GM12878 (cell line): ENCODE measurements at regions of chr18 and their contacts with region 1.

Region 1: GRCh38 chr18:74963820-74964446 is 245.0 kb downstream of the PTGR3 start:
- DNase-seq: no peak
- ATAC-seq: peak; percentile 97
- H3K4me3 ChIP-seq: no peak overlapping the region
- H3K27ac ChIP-seq: no peak overlapping the region
- H3K4me1 ChIP-seq: no peaks in the 10 kb centered on the region
- H3K27me3 ChIP-seq: no peaks in the 10 kb centered on the region
- CTCF ChIP-seq: peak; percentile 43 to 65 (median 46); a peak in 4 of 6 replicates
- EP300 ChIP-seq: no peak
- POLR2A ChIP-seq: no peak
- RAD21 ChIP-seq: peak; percentile 71

Region 2: GRCh38 chr18:74652392-74652988 is 311.4 kb before region 1 on chr18:
- CTCF ChIA-PET with region 1: interaction called, 38 read pairs
- POLR2A ChIA-PET with region 1: no interaction called
- RAD21 ChIA-PET with region 1: interaction called, 31 read pairs
- SMC1A ChIA-PET with region 1: interaction called, 32 read pairs
- in situ Hi-C with region 1: loop called (anchors 25 kb)
- intact Hi-C with region 1: loop called (anchors 2 kb)
- DNase-seq: no peak
- ATAC-seq: peak; percentile 85
- H3K4me3 ChIP-seq: no peak overlapping the region
- H3K27ac ChIP-seq: no peak overlapping the region
- H3K4me1 ChIP-seq: no peaks in the 10 kb centered on the region
- H3K27me3 ChIP-seq: no peaks in the 10 kb centered on the region
- CTCF ChIP-seq: peak; percentile 30 to 62 (median 58); a peak in 4 of 6 replicates
- EP300 ChIP-seq: no peak
- POLR2A ChIP-seq: no peak
- RAD21 ChIP-seq: peak; percentile 78

Region 3: DNA sequence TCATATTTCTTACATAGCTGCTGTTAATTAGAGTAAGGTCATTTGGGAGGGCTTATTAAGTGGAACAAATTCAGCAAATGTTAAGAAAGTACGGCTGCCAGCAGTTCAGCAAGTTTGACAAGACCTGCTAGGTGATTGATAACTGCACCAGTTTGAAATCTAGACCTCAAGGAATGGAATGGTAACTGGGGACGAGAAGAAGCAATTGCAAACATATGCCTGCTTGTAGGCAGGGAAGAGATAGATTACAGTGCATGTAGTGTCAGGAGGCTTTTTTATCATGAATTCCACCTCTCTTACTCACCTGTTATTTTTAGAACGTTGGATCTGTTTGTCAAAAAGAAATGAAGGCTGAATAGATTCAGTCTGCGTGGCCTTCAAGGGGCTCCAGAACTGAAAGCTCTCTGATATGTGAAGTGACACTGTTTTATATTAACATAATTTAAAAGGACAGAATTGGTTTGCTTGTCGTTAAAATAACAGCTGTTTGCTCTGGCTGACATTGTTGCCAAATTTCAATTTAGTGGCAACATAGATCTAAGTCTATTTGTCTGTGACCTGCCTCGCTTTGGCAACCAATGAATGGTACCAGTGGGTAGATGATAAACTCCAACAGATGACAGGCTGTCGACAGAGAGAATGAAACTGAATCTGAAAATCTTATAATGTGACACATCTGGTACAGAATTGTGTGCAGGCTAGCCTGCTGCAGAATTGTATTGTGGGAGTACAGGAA is 166.9 kb before region 1 on chr18:
- CTCF ChIA-PET with region 1: interaction called, 16 read pairs
- POLR2A ChIA-PET with region 1: no interaction called
- RAD21 ChIA-PET with region 1: interaction called, 6 read pairs
- SMC1A ChIA-PET with region 1: interaction called, 4 read pairs
- in situ Hi-C with region 1: no loop called
- intact Hi-C with region 1: no loop called
- DNase-seq: peak; percentile 40
- ATAC-seq: peak; percentile 99
- H3K4me3 ChIP-seq: peak overlapping the region; percentile 51
- H3K27ac ChIP-seq: 0 out of 2 replicates have a peak overlapping the region, but pooled peaks have one; percentile 17
- H3K4me1 ChIP-seq: peaks cover 16% of the 10 kb centered on the region; the same call in 1 of the 2 replicates
- H3K27me3 ChIP-seq: no peaks in the 10 kb centered on the region
- CTCF ChIP-seq: no peak
- EP300 ChIP-seq: no peak; a peak in 1 of 4 replicates
- POLR2A ChIP-seq: no peak
- RAD21 ChIP-seq: no peak

Region 4: DNA sequence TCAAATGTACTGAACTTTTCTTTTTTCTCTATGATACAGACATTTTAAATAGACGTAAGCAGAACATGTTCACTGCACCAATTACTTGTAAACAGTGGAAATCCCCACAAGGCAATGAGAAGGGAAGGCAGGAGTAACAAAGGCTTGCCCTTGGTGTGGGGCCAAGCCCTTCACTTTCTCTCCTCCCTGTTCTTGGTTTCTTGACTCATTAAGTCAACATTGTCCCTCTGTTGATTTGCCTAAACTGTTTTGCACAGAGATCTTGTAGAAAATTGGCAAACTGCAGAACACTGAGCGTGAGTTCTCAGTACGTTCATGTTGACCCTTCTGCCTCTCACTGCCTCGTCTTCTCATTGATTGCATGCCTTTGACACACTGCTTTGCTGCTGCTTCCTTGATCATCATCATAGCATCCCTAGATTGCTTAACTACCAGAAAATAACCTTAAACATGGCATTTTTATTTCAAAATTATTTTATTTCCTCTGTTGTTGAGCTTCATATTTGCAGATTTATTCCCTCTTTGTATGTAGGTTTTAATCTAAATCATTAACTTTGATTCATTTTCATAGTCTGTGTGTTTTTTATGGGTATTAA is 12.7 kb before region 1 on chr18:
- CTCF ChIA-PET with region 1: interaction called, 18 read pairs
- POLR2A ChIA-PET with region 1: no interaction called
- RAD21 ChIA-PET with region 1: interaction called, 7 read pairs
- SMC1A ChIA-PET with region 1: interaction called, 9 read pairs
- in situ Hi-C with region 1: no loop called
- intact Hi-C with region 1: no loop called
- DNase-seq: peak; percentile 59
- ATAC-seq: peak; percentile 95
- H3K4me3 ChIP-seq: no peak overlapping the region
- H3K27ac ChIP-seq: no peak overlapping the region
- H3K4me1 ChIP-seq: peaks cover 11% of the 10 kb centered on the region
- H3K27me3 ChIP-seq: no peaks in the 10 kb centered on the region
- CTCF ChIP-seq: no peak
- EP300 ChIP-seq: peak; percentile 33 to 42; a peak in 2 of 4 replicates
- POLR2A ChIP-seq: no peak
- RAD21 ChIP-seq: no peak

Region 5: GRCh38 chr18:74994502-74995419 is 30.8 kb after region 1 on chr18:
- CTCF ChIA-PET with region 1: interaction called, 5 read pairs
- POLR2A ChIA-PET with region 1: no interaction called
- RAD21 ChIA-PET with region 1: interaction called, 5 read pairs
- SMC1A ChIA-PET with region 1: interaction called, 14 read pairs
- in situ Hi-C with region 1: no loop called
- intact Hi-C with region 1: no loop called
- DNase-seq: peak; percentile 35
- ATAC-seq: peak; percentile 91
- H3K4me3 ChIP-seq: peak overlapping the region; percentile 42; the same call in 1 of the 2 replicates
- H3K27ac ChIP-seq: peak overlapping the region; percentile 88
- H3K4me1 ChIP-seq: peaks cover 20% of the 10 kb centered on the region
- H3K27me3 ChIP-seq: no peaks in the 10 kb centered on the region
- CTCF ChIP-seq: no peak
- EP300 ChIP-seq: peak; percentile 27 to 81; a peak in 2 of 4 replicates
- POLR2A ChIP-seq: no peak; the same call in 1 of the 2 replicates
- RAD21 ChIP-seq: no peak